Activated CD4-positive, alpha-beta T cell treated with anti-CD3 and anti-CD28 coated beads, Interleukin-2, amount 10 ng/mL, durations not matched to agents 7 days and 5 days (primary cell): ENCODE measurements at regions of chr19 and their contacts with region 1.

Region 1: DNA sequence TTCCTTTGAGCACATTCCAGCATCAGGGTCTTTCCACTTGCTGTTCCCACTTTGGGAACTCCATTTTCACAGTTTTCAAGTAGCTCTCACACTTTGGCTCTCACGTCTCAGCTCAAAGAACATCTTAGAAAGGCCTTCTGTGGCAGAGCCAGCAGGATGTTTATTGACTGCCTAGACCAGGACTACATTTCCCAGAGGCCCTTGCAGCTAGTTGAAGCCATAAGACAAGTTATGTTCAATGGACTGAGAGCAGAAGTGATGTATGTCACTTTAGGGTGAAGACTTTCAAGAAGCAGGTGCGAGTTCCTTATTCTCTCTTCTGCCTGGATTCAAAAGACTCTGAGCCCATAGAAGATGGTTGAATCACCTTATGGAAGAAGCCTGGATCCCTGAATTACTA is 4.3 kb upstream of the HAUS5 start:
- DNase-seq: peak; percentile 33
- H3K4me3 Mint-ChIP-seq: no peak overlapping the region
- H3K27ac Mint-ChIP-seq: peak overlapping the region; percentile 87
- H3K4me1 Mint-ChIP-seq: peaks cover 39% of the 10 kb centered on the region
- H3K27me3 Mint-ChIP-seq: no peaks in the 10 kb centered on the region

Region 2: DNA sequence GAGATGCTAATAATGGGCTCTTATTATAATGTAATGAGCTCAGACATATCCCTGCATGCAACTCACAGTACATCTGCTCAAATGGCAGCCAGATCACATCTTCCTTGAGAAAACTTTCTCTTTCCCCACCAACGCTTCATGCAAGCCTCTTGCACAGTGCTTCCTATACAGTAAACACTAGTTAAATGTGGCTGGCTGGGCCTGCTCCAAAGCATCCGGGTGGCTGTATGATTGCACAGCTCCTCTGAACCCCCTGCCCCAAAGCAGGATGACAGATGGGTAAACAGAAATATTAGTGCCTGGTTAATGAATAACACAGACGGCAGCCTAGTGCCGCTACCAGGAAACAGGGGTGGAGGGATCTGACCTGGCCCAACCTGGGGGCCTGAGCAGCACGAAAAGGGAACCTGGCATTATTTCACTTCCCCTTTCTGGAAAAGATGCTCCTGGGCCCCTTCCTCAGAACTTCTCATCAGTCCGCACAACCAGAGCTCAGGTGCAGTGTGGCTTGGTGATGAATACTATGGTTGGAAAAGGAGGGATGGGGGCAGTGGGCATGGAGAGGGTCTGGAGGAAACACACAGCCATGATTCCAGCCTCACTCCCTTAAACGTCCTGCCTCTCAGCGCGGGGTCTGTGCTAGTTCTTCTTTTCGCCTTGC is 149.4 kb before region 1 on chr19:
- CTCF ChIA-PET with region 1: no interaction called
- POLR2A ChIA-PET with region 1: no interaction called
- DNase-seq: no peak
- H3K4me3 Mint-ChIP-seq: no peak overlapping the region
- H3K27ac Mint-ChIP-seq: no peak overlapping the region
- H3K4me1 Mint-ChIP-seq: peaks cover 42% of the 10 kb centered on the region
- H3K27me3 Mint-ChIP-seq: peaks cover 12% of the 10 kb centered on the region

Region 3: GRCh38 chr19:35495107-35496064 is 112.9 kb before region 1 on chr19:
- CTCF ChIA-PET with region 1: no interaction called
- POLR2A ChIA-PET with region 1: no interaction called
- DNase-seq: peak; percentile 64
- H3K4me3 Mint-ChIP-seq: no peak overlapping the region
- H3K27ac Mint-ChIP-seq: no peak overlapping the region
- H3K4me1 Mint-ChIP-seq: peaks cover 7% of the 10 kb centered on the region
- H3K27me3 Mint-ChIP-seq: peaks cover 9% of the 10 kb centered on the region

Region 4: DNA sequence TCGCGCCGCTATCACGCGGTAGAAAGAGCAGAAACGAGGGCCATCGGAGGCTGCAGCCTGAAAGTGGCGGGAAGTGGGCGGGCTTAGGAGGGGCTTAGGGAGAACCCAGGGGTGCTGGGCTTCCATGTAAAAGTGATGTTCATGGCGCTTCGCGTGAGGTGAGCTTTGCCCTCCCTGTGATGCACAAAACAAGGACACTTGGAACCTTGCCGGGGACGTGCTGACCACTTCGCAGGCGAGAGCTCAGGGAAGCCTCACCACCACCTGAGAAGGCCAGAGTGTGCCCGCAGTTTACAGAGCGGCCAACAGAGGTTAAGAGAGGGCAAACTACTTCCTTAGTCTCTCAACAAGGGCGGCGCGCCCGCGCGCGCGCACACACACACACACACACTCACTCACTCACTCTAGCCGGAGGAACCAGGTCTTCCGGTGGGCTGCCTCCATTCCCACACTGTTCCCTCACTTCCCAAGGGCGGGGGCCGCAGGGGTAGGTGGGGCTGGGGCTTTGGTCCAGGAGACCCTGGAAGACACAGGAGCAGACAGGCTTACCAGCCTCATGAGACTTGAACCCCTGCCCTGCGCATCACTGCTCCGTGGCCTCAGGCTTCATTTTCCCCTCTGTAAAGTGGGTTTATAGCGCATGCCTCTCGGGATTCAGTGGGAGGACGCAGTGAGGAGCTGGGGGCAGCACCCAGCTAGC is 74.3 kb before region 1 on chr19:
- CTCF ChIA-PET with region 1: no interaction called
- POLR2A ChIA-PET with region 1: no interaction called
- DNase-seq: peak; percentile 48
- H3K4me3 Mint-ChIP-seq: no peak overlapping the region
- H3K27ac Mint-ChIP-seq: peak overlapping the region; percentile 79
- H3K4me1 Mint-ChIP-seq: peaks cover 12% of the 10 kb centered on the region
- H3K27me3 Mint-ChIP-seq: peaks cover 26% of the 10 kb centered on the region

Region 5: GRCh38 chr19:35585848-35586247 is 22.4 kb before region 1 on chr19 and contains the start of gene PMIS2:
- CTCF ChIA-PET with region 1: no interaction called
- POLR2A ChIA-PET with region 1: no interaction called
- DNase-seq: peak; percentile 8
- H3K4me3 Mint-ChIP-seq: no peak within 1 kb of the TSS
- H3K27ac Mint-ChIP-seq: no peak within 1 kb of the TSS
- H3K4me1 Mint-ChIP-seq: no peaks in the 10 kb centered on the region
- H3K27me3 Mint-ChIP-seq: peaks cover 15% of the 10 kb centered on the region
- total RNA-seq, gene PMIS2: not detected

Region 6: GRCh38 chr19:35596366-35596999 is 11.8 kb before region 1 on chr19:
- CTCF ChIA-PET with region 1: interaction called, 12 read pairs
- POLR2A ChIA-PET with region 1: no interaction called
- DNase-seq: peak; percentile 22
- H3K4me3 Mint-ChIP-seq: no peak overlapping the region
- H3K27ac Mint-ChIP-seq: no peak overlapping the region
- H3K4me1 Mint-ChIP-seq: peaks cover 10% of the 10 kb centered on the region
- H3K27me3 Mint-ChIP-seq: peaks cover 4% of the 10 kb centered on the region